T-cell (primary cell): ENCODE measurements at regions of chr7 and their contacts with region 1.

Region 1: DNA sequence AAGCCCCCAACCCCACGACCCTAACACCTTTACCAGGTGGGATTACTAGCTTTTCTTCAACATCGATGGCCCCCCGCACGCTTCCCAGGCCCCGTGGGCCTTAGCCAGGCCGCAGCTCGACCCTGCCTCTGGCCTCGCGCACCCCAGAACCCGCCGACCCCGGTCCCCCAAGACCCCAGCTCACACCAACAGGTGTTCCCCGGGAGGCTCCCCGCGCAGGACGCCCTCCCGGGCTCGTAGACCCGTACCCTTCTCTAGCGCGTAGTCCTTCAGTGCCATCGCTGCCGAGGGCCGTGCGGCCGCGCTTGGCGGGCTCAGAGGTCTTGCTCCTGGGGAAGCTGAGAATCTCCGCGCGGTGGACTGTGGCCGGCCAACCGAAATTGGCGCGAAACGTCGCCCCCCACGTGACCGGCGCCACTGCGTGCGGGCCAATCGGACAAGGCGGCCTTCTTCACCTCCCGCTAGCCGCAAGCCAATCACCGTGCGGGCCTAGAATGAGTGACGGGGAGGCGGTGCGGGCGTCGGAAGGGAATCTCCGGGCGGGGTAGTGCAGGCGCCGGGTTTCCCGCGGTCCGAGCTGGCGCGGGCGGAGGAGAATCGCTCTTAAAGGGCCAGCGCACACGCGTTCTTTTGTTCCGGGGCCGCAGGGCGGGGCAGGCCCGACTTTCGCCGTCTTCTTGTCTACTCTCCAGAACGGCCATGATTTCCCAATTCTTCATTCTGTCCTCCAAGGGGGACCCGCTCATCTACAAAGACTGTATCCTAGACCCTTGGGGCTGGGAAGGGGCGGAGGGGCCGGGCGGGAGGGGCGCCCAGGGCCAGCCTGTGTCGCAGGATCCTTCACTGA is at the starts of genes AP4M1 and MCM7:
- DNase-seq: peak; percentile 83 to 97 (median 93)
- ATAC-seq: peak; percentile 86 to 89 (median 88)
- H3K4me3 ChIP-seq: peak within 1 kb of the TSS; percentile 74 to 98
- H3K4me3 Mint-ChIP-seq: peak within 1 kb of the TSS; percentile 91 to 96 (median 92)
- H3K27ac ChIP-seq: peak within 1 kb of the TSS; percentile 81
- H3K27ac Mint-ChIP-seq: peak within 1 kb of the TSS; percentile 94 to 96
- H3K4me1 ChIP-seq: peaks cover 9 to 38% of the 10 kb centered on the region in 2 experiments
- H3K4me1 Mint-ChIP-seq: peaks cover 37 to 47% (median 39%) of the 10 kb centered on the region in 3 donors
- H3K27me3 ChIP-seq: no peaks in the 10 kb centered on the region
- H3K27me3 Mint-ChIP-seq: no peaks in the 10 kb centered on the region
- total RNA-seq, gene AP4M1: 5.5 to 18.7 (median 11.6) TPM
- total RNA-seq, gene MCM7: 95.2 to 181 (median 164) TPM

Region 2: GRCh38 chr7:99558306-99559174 is 542.7 kb before region 1 on chr7 and contains the start of gene ZNF655:
- CTCF ChIA-PET with region 1: no interaction called
- POLR2A ChIA-PET with region 1: interaction called in 1 of 2 experiments, 12 read pairs
- DNase-seq: peak; percentile 86 to 96 (median 93)
- ATAC-seq: peak; percentile 84 to 88 (median 84)
- H3K4me3 ChIP-seq: peak within 1 kb of the TSS; percentile 85 to 98
- H3K4me3 Mint-ChIP-seq: peak within 1 kb of the TSS; percentile 93 to 99 (median 99)
- H3K27ac ChIP-seq: peak within 1 kb of the TSS; percentile 95
- H3K27ac Mint-ChIP-seq: peak within 1 kb of the TSS; percentile 99 to 100
- H3K4me1 ChIP-seq: peaks cover 14 to 34% of the 10 kb centered on the region in 2 experiments
- H3K4me1 Mint-ChIP-seq: peaks cover 55 to 66% (median 59%) of the 10 kb centered on the region in 3 donors
- H3K27me3 ChIP-seq: no peaks in the 10 kb centered on the region
- H3K27me3 Mint-ChIP-seq: no peaks in the 10 kb centered on the region
- total RNA-seq, gene ZNF655: 145 to 163 (median 157) TPM

Region 3: GRCh38 chr7:99990460-99990852 is 110.8 kb before region 1 on chr7:
- CTCF ChIA-PET with region 1: interaction called in 1 of 2 experiments, 12 read pairs
- POLR2A ChIA-PET with region 1: no interaction called
- DNase-seq: peak in 1 of 35 experiments; percentile 12
- ATAC-seq: peak in 2 of 4 experiments; percentile 5 to 26
- H3K4me3 ChIP-seq: no peak overlapping the region
- H3K4me3 Mint-ChIP-seq: no peak overlapping the region
- H3K27ac ChIP-seq: no peak overlapping the region
- H3K27ac Mint-ChIP-seq: no peak overlapping the region
- H3K4me1 ChIP-seq: peaks cover 0 to 4% of the 10 kb centered on the region in 2 experiments
- H3K4me1 Mint-ChIP-seq: peaks cover 0 to 3% (median 2%) of the 10 kb centered on the region in 3 donors
- H3K27me3 ChIP-seq: peaks cover 0 to 20% of the 10 kb centered on the region in 2 experiments
- H3K27me3 Mint-ChIP-seq: peaks cover 0 to 5% of the 10 kb centered on the region in 2 donors

Region 4: DNA sequence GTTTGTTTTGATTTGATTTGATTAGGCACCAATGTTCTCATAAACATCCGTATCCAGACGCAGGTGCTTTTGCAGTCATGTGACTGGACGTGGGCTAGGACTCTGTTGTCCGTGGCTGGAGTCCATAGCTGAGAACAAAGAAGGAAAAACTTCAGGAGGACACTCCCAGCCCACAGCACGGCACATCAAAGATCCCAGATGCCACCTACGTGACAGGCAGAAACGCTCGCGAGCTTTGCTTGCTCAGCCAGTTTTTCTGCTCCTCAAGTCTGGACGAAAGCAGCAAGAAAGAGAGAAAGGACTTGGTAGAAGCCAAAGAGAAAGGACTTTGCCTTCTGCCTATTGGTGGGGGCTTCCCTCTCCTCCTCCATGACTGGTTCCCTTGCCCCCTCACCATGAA is 92.7 kb before region 1 on chr7:
- CTCF ChIA-PET with region 1: no interaction called
- POLR2A ChIA-PET with region 1: no interaction called
- DNase-seq: no peak
- ATAC-seq: no peak
- H3K4me3 ChIP-seq: no peak overlapping the region
- H3K4me3 Mint-ChIP-seq: no peak overlapping the region
- H3K27ac ChIP-seq: no peak overlapping the region
- H3K27ac Mint-ChIP-seq: no peak overlapping the region
- H3K4me1 ChIP-seq: no peaks in the 10 kb centered on the region
- H3K4me1 Mint-ChIP-seq: peaks cover 0 to 6% (median 4%) of the 10 kb centered on the region in 3 donors
- H3K27me3 ChIP-seq: peaks cover 0 to 20% of the 10 kb centered on the region in 2 experiments
- H3K27me3 Mint-ChIP-seq: peaks cover 5 to 9% of the 10 kb centered on the region in 2 donors

Region 5: DNA sequence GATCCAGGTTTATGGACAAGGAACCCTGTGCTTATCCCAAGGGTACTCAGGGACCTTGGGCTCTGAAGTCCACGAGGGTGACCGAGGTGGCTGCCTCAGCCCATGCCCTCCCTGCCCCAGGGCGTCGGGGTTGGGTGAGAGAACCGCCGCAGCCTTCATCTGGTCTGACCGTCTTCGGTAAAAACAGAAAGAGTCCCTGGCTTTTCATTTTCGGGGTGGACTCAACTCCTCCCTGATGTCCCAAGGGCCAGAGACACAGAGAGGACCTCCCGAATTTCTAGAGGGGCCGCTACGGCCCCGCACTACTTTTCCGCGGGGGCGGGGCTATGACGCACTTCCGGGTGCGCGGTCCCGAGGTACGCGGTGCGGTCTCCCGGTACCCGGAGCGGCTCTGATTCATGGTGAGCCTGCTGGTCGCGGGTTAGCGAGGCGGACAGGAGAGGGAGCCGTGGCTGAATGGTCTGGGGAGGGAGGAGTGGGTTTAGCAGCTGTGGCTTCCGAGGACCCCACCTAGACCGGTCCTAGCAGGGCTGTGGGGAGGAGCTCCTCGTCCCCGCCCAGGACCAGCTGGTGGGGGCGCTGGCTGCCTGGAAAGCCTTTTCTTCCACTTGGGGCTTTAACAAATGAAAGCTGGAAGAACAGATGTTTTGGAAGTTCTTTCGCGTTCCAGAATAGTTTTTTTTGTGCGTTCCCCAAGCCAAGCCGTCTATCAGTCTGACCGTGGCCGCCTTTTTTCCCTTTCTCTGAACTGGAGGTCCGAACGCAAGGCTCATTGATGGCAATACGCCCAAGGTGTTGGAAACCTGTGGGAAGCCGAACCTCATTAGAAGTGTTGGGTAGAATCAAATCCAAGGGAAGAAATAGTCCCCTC is 51.6 kb before region 1 on chr7 and contains the start of gene ZSCAN21:
- CTCF ChIA-PET with region 1: no interaction called
- POLR2A ChIA-PET with region 1: interaction called, 3 to 13 read pairs
- DNase-seq: peak; percentile 46 to 87 (median 71)
- ATAC-seq: peak; percentile 91 to 94 (median 92)
- H3K4me3 ChIP-seq: peak within 1 kb of the TSS; percentile 79 to 93
- H3K4me3 Mint-ChIP-seq: peak within 1 kb of the TSS; percentile 87 to 93 (median 89)
- H3K27ac ChIP-seq: peak within 1 kb of the TSS; percentile 78
- H3K27ac Mint-ChIP-seq: peak within 1 kb of the TSS; percentile 88 to 96
- H3K4me1 ChIP-seq: peaks cover 0 to 15% of the 10 kb centered on the region in 2 experiments
- H3K4me1 Mint-ChIP-seq: peaks cover 10 to 23% (median 21%) of the 10 kb centered on the region in 3 donors
- H3K27me3 ChIP-seq: no peaks in the 10 kb centered on the region
- H3K27me3 Mint-ChIP-seq: peaks cover 0 to 2% of the 10 kb centered on the region in 2 donors
- total RNA-seq, gene ZSCAN21: 4.4 to 9.9 (median 9.3) TPM

Region 6: GRCh38 chr7:100081535-100082102 is 19.6 kb before region 1 on chr7 and contains the start of gene ZNF3:
- CTCF ChIA-PET with region 1: interaction called in 1 of 2 experiments, 18 read pairs
- POLR2A ChIA-PET with region 1: interaction called, 4 to 19 read pairs
- DNase-seq: peak; percentile 93 to 99 (median 97)
- ATAC-seq: peak; percentile 89 to 97 (median 96)
- H3K4me3 ChIP-seq: peak within 1 kb of the TSS; percentile 81 to 83
- H3K4me3 Mint-ChIP-seq: peak within 1 kb of the TSS; percentile 79 to 89 (median 88)
- H3K27ac ChIP-seq: peak within 1 kb of the TSS; percentile 70
- H3K27ac Mint-ChIP-seq: peak within 1 kb of the TSS; percentile 88 to 89
- H3K4me1 ChIP-seq: peaks cover 10 to 28% of the 10 kb centered on the region in 2 experiments
- H3K4me1 Mint-ChIP-seq: peaks cover 31 to 43% (median 37%) of the 10 kb centered on the region in 3 donors
- H3K27me3 ChIP-seq: peaks cover 0 to 5% of the 10 kb centered on the region in 2 experiments
- H3K27me3 Mint-ChIP-seq: no peaks in the 10 kb centered on the region
- total RNA-seq, gene ZNF3: 31.7 to 39.2 (median 35.4) TPM